ENCODE measurements at regions of chr12 and their contacts with region 1.

Region 1: DNA sequence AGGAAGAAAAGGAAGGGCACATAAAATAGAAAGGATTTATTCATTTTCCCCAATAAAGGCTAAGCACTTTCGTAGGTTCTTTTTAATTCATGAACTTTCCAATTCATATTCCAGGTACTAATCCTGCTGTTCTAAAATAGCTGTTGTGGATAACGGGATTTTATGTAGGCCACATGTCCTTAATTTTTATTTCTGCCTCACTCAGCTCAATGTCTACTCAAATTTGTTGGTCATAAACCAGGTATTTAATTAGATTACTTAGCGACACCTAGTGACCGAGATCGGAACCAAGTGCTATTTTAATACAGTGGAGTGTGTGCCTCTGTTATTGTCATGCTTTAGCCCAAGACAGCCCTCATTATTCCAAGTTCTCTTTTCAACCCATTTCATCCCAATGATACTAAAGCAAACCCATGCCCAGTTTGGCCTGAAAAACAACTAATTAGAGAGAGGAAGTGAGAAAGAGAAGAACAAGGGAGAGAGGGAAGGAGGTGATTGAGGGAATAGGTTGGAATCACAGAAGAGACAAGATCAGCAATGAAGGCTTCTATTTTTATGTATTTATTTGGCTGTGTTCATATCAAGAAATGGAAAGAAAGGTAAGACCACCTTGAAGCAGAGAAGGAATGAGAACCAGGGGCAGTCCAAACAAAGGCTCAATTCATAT is 45.9 kb upstream of the IFNG-AS1 start:
- DNase-seq: peak; percentile 86
- H3K4me3 ChIP-seq: no peak overlapping the region
- H3K27ac ChIP-seq: no peak overlapping the region
- H3K4me1 ChIP-seq: peaks cover 5% of the 10 kb centered on the region
- H3K27me3 ChIP-seq: no peaks in the 10 kb centered on the region
- CTCF ChIP-seq: peak; percentile 62

Region 2: GRCh38 chr12:67355578-67356379 is 587.6 kb before region 1 on chr12:
- intact Hi-C with region 1: loop called (anchors 5 kb)
- DNase-seq: no peak
- H3K4me3 ChIP-seq: no peak overlapping the region
- H3K27ac ChIP-seq: no peak overlapping the region
- H3K4me1 ChIP-seq: no peaks in the 10 kb centered on the region
- H3K27me3 ChIP-seq: no peaks in the 10 kb centered on the region
- CTCF ChIP-seq: peak; percentile 57

Region 3: DNA sequence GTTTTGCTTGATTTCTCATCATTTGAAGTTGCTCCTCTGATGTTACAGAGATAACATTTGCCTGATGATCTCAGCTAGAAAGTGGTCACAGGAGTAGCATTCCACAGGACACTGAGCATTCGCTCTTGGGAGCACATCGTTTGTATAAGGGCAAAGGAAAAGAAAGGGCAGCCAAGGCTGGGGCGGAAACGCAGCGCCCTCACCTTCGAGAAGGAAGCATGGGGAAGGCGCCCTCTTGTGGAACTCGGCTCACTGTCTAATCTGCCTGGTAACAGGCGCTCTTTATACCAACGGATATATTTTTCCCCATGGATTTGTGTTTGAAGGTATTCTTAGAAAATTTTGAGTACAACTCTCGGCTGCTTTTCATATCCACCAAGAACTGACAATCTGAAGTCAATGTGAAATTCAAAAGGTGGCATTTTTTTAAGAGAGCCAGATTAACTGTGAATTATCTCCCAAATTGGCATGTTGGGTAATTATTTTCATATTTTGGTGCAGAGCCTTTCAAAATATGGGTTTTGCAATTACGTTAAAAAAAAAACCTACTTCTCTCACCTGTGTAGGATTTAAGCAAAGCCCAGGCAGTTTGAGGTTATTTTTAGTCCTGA is 501.5 kb before region 1 on chr12:
- intact Hi-C with region 1: loop called (anchors 10 kb)
- DNase-seq: peak; percentile 95
- H3K4me3 ChIP-seq: no peak overlapping the region
- H3K27ac ChIP-seq: no peak overlapping the region
- H3K4me1 ChIP-seq: no peaks in the 10 kb centered on the region
- H3K27me3 ChIP-seq: no peaks in the 10 kb centered on the region
- CTCF ChIP-seq: peak; percentile 70

Region 4: GRCh38 chr12:67648521-67649260 is 294.7 kb before region 1 on chr12 and contains the start of gene DYRK2:
- intact Hi-C with region 1: loop called (anchors 5 kb)
- DNase-seq: peak; percentile 80
- H3K4me3 ChIP-seq: peak within 1 kb of the TSS; percentile 94
- H3K27ac ChIP-seq: peak within 1 kb of the TSS; percentile 99
- H3K4me1 ChIP-seq: peaks cover 5% of the 10 kb centered on the region
- H3K27me3 ChIP-seq: no peaks in the 10 kb centered on the region
- CTCF ChIP-seq: no peak
- total RNA-seq, gene DYRK2: 66.0 to 112 TPM